ENCODE measurements at regions of chr6 and their contacts with region 1.

Region 1: DNA sequence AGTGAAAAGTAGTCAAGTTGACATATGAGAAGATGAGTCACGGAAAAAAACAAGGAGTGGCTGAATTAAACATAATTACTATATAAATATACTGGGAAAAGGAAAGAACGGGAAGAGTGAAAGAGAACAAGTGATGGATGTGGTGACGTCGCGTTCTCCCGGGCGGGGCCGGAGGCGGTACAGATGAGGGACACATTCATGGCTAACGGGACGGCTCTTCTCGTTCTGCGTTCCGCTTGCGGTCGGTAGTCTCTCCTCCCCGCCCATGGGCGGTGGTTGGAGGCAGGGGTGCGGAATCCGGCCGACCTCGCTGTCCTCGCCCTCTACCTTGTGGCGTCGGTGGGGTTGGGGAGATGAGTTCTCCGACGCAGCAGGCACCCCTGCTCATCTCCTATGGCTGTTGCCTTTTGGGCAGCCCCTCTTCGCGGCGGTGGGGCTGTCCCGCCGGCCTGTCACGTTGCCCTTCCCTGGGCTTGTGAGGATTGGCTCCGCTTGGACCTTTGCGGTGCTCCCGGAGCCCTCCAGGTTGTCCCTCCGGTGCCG is 22.5 kb downstream of the HLA-G start:
- DNase-seq: no peak
- H3K4me3 ChIP-seq: peak overlapping the region in 1 of 3 donors; percentile 38
- H3K27ac ChIP-seq: no peak overlapping the region
- H3K4me1 ChIP-seq: peaks cover 0 to 4% (median 0%) of the 10 kb centered on the region in 3 donors
- H3K27me3 ChIP-seq: peaks cover 17% of the 10 kb centered on the region
- CTCF ChIP-seq: no peak

Region 2: DNA sequence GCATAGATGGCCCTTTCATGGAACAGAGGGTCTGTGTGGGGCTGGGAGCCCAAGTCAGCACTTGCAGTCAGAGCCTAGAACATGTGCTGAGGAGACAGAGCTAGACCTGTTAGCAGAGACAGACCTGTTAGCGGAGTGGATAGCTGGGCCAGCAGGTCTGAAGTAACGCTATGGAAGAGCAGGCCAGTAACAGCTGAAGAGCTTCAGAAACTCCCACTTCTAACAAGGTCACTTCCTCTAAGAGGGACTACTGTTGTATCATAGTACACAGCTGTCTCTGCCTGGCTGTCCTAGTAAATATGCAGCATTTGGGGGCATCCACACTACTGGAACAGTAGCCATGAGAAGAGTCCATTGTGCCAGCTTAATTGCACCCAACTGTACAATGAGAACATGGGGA is 169.7 kb after region 1 on chr6:
- intact Hi-C with region 1: loop called (anchors 5 kb)
- DNase-seq: peak in 1 of 5 donors; percentile 26
- H3K4me3 ChIP-seq: no peak overlapping the region
- H3K27ac ChIP-seq: no peak overlapping the region
- H3K4me1 ChIP-seq: no peaks in the 10 kb centered on the region
- H3K27me3 ChIP-seq: no peaks in the 10 kb centered on the region
- CTCF ChIP-seq: no peak

Region 3: DNA sequence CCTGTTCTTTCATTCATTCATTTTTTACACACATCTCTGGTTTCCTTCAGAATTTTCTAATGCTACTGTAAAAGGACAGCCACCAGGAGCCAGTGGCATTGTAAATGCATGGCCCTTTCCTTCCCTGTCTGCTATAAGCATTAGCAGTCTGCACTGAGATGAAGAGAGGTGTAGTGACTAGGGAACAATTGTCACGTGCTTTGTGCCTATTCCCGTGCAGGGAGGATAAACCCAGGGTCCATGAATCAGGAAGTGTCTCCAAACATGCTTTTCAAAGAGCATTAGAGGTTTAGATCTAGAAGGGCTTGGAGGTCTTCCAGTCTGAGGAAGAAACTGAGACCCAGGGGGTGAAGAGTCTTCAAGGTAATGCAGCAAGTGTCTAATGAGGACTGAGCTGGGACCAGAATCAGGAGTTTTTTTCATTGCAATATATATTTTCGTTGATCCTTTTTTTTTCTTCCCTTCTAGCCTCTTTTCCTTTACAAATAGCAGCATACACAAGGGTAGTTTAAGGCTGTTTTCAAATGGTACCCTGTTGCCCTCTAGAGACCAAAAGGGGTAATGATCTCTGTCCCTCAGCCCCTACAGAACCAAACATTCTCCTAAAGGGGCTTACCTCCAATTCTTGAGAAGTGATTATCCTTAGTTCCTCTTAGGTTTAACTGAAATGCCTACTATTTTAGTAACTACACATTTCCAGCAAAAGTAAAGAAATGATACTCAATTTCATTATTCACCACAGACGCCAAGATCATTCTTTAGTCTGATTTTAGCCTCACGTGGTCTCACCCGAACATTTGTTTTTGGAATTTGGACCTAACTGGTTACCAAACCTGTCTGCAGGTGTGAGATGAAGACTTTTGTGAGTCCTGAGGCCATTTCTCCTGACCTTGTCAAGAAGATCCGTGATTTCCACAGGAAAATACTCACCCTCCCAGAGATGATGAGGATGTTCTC is 319.9 kb after region 1 on chr6:
- intact Hi-C with region 1: no loop called
- DNase-seq: peak in 2 of 5 donors; percentile 43 to 66
- H3K4me3 ChIP-seq: no peak overlapping the region
- H3K27ac ChIP-seq: no peak overlapping the region
- H3K4me1 ChIP-seq: no peaks in the 10 kb centered on the region
- H3K27me3 ChIP-seq: peaks cover 16% of the 10 kb centered on the region
- CTCF ChIP-seq: peak; percentile 71

Measured in kidney (tissue), 22 donors.